Right ventricle myocardium inferior (tissue), 1 donor: ENCODE measurements at regions of chr1 and their contacts with region 1.

Region 1: GRCh38 chr1:10253755-10254154 is 43.4 kb downstream of the KIF1B start:
- DNase-seq: no peak
- ATAC-seq: peak; percentile 95

Region 2: DNA sequence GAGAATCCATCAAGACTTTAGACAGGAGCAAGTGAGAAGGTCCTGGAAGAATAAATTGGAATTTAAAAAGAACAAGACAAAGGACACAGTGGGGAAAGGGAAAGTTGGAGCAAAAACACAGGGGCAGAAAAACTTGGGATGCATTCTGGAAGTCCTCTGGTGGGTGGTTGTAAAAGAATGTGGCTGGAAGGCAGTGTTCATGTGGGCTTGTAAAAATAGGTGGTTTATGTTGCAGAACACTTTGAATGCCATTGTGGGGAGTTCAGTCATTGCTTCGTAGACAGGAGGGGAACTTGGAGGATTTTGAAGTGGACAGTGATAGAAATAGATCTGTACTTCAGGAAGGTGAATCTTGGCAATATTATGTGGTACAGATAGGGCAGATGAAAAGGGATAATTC is 28.2 kb before region 1 on chr1:
- intact Hi-C with region 1: loop called (anchors 1 kb)
- DNase-seq: no peak
- ATAC-seq: no peak

Region 3: GRCh38 chr1:10286244-10286643 is 32.5 kb after region 1 on chr1:
- intact Hi-C with region 1: loop called (anchors 5 kb)
- DNase-seq: no peak
- ATAC-seq: peak; percentile 95